ENCODE measurements at regions of chr18 and their contacts with region 1.

Region 1: DNA sequence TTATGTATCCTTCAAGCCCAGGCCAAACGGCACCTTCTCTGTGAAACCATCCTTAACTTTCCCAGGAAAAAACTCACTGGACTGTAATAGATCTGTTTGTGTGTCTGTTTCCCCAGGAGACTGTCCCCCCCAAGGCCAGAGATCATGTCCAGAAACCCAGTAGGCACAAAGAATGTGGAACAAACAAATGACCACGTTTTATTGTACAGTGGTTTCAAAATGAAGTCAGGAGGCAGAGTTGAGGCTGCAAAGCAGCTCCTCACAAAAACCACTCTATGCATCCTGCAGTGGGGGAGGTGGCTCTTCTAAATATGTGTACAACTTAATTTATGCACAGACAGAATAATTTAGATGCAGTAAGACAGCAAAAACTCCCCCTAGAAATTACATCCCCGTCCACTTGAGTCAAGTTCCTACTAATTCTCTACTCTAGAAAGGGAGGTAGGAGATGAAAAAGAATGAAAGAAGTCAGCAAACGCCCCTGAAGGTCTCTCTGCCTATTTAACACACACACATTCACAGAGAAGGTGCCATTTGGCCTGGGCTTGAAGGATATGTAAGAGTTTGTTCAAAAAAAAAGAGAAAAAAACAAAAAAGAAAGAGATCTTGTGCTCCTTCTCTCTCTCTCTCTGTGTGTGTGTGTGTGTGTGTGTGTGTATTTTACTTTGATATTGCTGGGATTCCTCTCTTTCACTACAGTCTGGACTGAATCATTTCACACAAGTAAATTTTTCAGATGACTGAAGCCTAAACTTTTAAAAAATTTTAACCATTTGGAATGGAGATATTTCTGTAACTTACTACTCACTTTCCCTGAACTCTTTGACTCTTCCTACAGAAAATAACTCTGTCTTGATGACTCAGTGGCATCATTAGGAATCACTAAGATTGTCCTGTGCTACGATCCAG is 19.5 kb downstream of the BCL2 start:
- DNase-seq: peak; percentile 76
- H3K4me3 Mint-ChIP-seq: peak overlapping the region; percentile 45
- H3K27ac Mint-ChIP-seq: peak overlapping the region; percentile 93
- H3K4me1 Mint-ChIP-seq: peaks cover 86% of the 10 kb centered on the region
- H3K27me3 Mint-ChIP-seq: no peaks in the 10 kb centered on the region

Region 2: GRCh38 chr18:63105636-63106316 is 194.3 kb before region 1 on chr18:
- CTCF ChIA-PET with region 1: no interaction called
- POLR2A ChIA-PET with region 1: no interaction called
- intact Hi-C with region 1: loop called (anchors 5 kb)
- DNase-seq: peak; percentile 31
- H3K4me3 Mint-ChIP-seq: no peak overlapping the region
- H3K27ac Mint-ChIP-seq: no peak overlapping the region
- H3K4me1 Mint-ChIP-seq: peaks cover 33% of the 10 kb centered on the region
- H3K27me3 Mint-ChIP-seq: peaks cover under 1% of the 10 kb centered on the region

Region 3: GRCh38 chr18:63253428-63254372 is 46.4 kb before region 1 on chr18:
- CTCF ChIA-PET with region 1: interaction called, 4 read pairs
- POLR2A ChIA-PET with region 1: no interaction called
- intact Hi-C with region 1: loop called (anchors 2 kb)
- DNase-seq: no peak
- H3K4me3 Mint-ChIP-seq: no peak overlapping the region
- H3K27ac Mint-ChIP-seq: peak overlapping the region; percentile 62
- H3K4me1 Mint-ChIP-seq: peaks cover 74% of the 10 kb centered on the region
- H3K27me3 Mint-ChIP-seq: no peaks in the 10 kb centered on the region

Region 4: DNA sequence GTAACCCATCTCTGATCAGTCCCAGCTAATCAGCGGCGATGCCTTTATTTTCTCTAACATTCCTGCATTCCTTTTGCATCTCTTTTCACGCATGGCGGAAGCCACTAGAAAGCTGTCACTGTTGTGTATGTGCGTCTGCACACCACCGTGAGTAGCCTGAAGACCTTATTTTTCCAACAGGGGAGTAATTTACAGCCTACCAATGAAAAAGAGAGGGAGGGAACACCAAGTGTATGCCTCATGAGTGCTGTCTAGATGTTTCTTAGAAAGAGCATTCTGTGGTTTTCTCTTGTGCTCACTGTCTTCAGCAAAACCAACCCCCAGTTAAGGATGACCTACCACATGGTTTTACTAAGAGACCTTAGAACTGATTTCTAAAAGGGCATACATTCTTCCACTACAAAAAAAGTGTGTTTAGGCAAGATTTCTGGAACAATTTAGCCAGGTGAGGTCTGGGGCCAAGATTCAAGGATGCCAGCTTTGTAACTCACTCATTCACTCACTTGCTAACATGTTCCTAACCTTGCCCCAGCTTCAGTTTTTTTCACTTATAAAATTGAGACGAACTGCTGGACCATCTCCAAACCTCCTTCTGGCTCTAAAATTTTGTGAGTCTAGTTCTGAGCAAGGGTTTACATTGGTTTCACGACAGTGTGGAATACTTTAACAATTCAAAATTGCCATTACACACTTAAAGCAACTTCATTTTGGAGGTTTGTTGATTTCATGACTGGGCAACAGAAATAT is 31.9 kb before region 1 on chr18:
- CTCF ChIA-PET with region 1: interaction called, 3 read pairs
- POLR2A ChIA-PET with region 1: interaction called, 3 read pairs
- intact Hi-C with region 1: loop called (anchors 2 kb)
- DNase-seq: no peak
- H3K4me3 Mint-ChIP-seq: peak overlapping the region; percentile 2
- H3K27ac Mint-ChIP-seq: peak overlapping the region; percentile 70
- H3K4me1 Mint-ChIP-seq: peaks cover 68% of the 10 kb centered on the region
- H3K27me3 Mint-ChIP-seq: no peaks in the 10 kb centered on the region

Region 5: DNA sequence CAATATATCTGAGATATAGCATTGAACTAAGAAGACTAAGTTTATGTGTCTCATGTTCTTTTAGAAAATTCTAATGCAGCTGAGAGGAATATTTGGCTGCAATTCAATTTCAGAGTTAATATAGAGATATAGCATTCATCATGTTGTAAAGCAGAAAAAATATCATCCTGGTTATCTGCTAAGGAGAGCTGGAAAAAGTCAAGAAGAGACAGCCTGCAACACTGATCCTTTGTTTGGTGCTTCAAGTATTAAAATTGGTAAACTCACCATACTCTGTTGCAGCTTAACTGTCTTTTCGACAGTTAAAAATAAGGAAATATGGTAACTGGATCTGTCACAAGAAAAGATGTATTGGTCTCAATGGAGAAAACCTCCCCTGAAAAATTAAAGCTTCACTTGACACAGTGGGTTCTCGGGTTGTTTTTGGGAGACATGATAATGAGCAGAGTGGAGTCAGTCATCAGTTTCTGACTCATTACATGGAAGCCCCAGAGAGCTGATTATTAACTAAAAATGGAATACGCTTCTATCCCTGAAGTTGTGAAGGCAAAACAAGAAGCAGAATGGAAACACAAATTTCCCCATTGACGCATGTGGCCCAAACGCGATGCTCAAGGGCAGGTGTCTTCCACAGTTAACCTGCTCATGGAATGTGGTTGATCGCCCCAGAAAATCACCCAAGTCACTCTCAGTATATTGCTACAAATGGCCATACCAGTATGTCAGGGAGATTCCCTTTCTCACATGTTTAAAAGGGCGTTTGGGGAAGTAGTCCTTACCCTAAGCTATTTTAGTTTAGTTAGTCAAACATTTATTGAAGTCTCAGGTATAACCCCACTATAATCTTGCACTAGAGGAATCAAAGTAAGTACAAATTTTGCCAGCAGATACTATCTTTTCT is 11.3 kb after region 1 on chr18:
- CTCF ChIA-PET with region 1: interaction called, 5 read pairs
- POLR2A ChIA-PET with region 1: interaction called, 12 read pairs
- intact Hi-C with region 1: no loop called
- DNase-seq: no peak
- H3K4me3 Mint-ChIP-seq: no peak overlapping the region
- H3K27ac Mint-ChIP-seq: peak overlapping the region; percentile 14
- H3K4me1 Mint-ChIP-seq: peaks cover 85% of the 10 kb centered on the region
- H3K27me3 Mint-ChIP-seq: no peaks in the 10 kb centered on the region